GM23248 (cell line): ENCODE measurements at regions of chr4 and their contacts with region 1.

Region 1: DNA sequence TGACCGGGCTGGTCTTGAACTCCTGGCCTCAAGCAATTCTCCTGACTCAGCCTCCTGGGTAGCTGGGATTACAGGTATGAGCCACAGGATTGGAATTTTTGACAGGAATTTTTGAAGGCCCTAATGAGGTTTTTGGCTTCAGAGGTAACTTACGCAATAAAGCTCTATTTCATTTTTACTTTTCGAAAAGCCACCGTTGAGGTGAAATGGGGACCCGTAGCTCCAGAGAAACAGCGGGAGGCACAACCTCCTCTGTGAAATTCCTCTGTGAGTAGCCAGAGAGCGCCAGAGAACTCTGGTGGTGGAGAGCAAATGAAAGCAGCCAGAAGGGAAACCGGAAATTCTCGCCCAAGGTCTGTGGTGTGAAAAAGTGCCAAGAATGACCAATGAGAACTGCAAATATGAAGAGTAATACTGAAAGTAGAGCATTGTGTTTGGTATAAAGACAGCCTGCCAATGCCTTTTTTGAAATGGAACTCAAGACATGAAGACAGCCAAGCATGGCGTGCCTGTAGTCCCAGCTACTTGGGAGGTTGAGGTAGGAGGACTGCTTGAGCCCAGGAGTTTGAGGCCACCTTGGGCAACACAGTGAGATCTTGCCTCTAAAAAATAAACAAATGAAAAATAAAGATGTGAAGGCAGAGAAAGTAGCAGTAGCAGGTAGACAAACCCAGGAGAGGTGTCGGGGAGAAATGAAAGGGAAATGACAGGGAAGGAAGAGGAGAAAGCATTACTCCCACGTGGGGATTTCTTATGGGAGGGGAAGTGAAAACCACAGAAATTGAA is 33.0 kb upstream of the TMEM131L start:
- DNase-seq: peak; percentile 89
- H3K4me3 ChIP-seq: no peak overlapping the region
- H3K27ac ChIP-seq: 0 out of 2 replicates have a peak overlapping the region, but pooled peaks have one; percentile 16
- H3K4me1 ChIP-seq: peaks cover 3% of the 10 kb centered on the region
- H3K27me3 ChIP-seq: no peaks in the 10 kb centered on the region

Region 2: GRCh38 chr4:153573881-153574802 is 141.0 kb after region 1 on chr4:
- in situ Hi-C with region 1: loop called (anchors 10 kb)
- DNase-seq: peak; percentile 87
- H3K4me3 ChIP-seq: no peak overlapping the region
- H3K27ac ChIP-seq: no peak overlapping the region
- H3K4me1 ChIP-seq: peaks cover 9% of the 10 kb centered on the region
- H3K27me3 ChIP-seq: no peaks in the 10 kb centered on the region

Region 3: GRCh38 chr4:153731239-153731638 is 298.1 kb after region 1 on chr4:
- in situ Hi-C with region 1: no loop called
- DNase-seq: peak; percentile 83
- H3K4me3 ChIP-seq: no peak overlapping the region
- H3K27ac ChIP-seq: peak overlapping the region; percentile 26
- H3K4me1 ChIP-seq: no peaks in the 10 kb centered on the region; the same call in 1 of the 2 replicates
- H3K27me3 ChIP-seq: no peaks in the 10 kb centered on the region